ENCODE measurements at regions of chr5 and their contacts with region 1.

Region 1: DNA sequence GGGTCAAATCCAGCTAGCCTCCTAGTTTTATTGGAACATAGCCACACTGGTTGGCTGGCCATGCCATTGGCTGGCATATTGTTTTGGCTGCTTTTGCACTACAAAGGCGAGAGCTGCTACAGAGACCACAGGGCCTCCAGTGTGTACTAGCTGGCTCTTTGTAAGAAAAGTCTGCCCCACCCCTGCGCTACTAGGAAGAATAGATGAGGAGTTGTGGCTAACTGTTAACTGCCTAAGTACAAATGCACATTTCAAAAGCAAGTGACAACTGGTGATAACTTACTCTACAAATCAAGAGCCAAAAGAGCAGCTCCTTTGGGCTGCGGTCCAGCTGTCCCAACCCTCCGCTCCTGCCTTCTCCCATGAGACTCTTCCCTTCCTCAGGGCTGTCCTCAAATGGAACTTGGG is 63.9 kb downstream of the SERINC5 start:
- DNase-seq: peak; percentile 73
- ATAC-seq: peak; percentile 70
- H3K4me3 Mint-ChIP-seq: peak overlapping the region; percentile 66
- H3K27ac Mint-ChIP-seq: peak overlapping the region; percentile 86
- H3K4me1 Mint-ChIP-seq: peaks cover 77% of the 10 kb centered on the region
- H3K27me3 Mint-ChIP-seq: no peaks in the 10 kb centered on the region
- CTCF ChIP-seq: no peak

Region 2: GRCh38 chr5:79982136-79982535 is 209.9 kb before region 1 on chr5:
- CTCF ChIA-PET with region 1: no interaction called
- POLR2A ChIA-PET with region 1: no interaction called
- intact Hi-C with region 1: no loop called
- DNase-seq: no peak
- ATAC-seq: peak; percentile 13
- H3K4me3 Mint-ChIP-seq: no peak overlapping the region
- H3K27ac Mint-ChIP-seq: peak overlapping the region; percentile 76
- H3K4me1 Mint-ChIP-seq: peaks cover 63% of the 10 kb centered on the region
- H3K27me3 Mint-ChIP-seq: no peaks in the 10 kb centered on the region
- CTCF ChIP-seq: no peak

Region 3: GRCh38 chr5:80069918-80070318 is 122.1 kb before region 1 on chr5:
- CTCF ChIA-PET with region 1: no interaction called
- POLR2A ChIA-PET with region 1: no interaction called
- intact Hi-C with region 1: no loop called
- DNase-seq: no peak
- ATAC-seq: no peak
- H3K4me3 Mint-ChIP-seq: no peak overlapping the region
- H3K27ac Mint-ChIP-seq: no peak overlapping the region
- H3K4me1 Mint-ChIP-seq: peaks cover 4% of the 10 kb centered on the region
- H3K27me3 Mint-ChIP-seq: no peaks in the 10 kb centered on the region
- CTCF ChIP-seq: no peak

Region 4: GRCh38 chr5:80125962-80126480 is 66.0 kb before region 1 on chr5:
- CTCF ChIA-PET with region 1: no interaction called
- POLR2A ChIA-PET with region 1: interaction called, 3 read pairs
- intact Hi-C with region 1: loop called (anchors 5 kb)
- DNase-seq: peak; percentile 37
- ATAC-seq: peak; percentile 90
- H3K4me3 Mint-ChIP-seq: peak overlapping the region; percentile 11
- H3K27ac Mint-ChIP-seq: peak overlapping the region; percentile 78
- H3K4me1 Mint-ChIP-seq: peaks cover 55% of the 10 kb centered on the region
- H3K27me3 Mint-ChIP-seq: no peaks in the 10 kb centered on the region
- CTCF ChIP-seq: peak; percentile 36

Region 5: GRCh38 chr5:80181618-80182211 is 10.3 kb before region 1 on chr5:
- CTCF ChIA-PET with region 1: interaction called, 5 read pairs
- POLR2A ChIA-PET with region 1: interaction called, 16 read pairs
- intact Hi-C with region 1: no loop called
- DNase-seq: peak; percentile 68
- ATAC-seq: peak; percentile 34
- H3K4me3 Mint-ChIP-seq: peak overlapping the region; percentile 36
- H3K27ac Mint-ChIP-seq: peak overlapping the region; percentile 86
- H3K4me1 Mint-ChIP-seq: peaks cover 84% of the 10 kb centered on the region
- H3K27me3 Mint-ChIP-seq: no peaks in the 10 kb centered on the region
- CTCF ChIP-seq: no peak

Region 6: DNA sequence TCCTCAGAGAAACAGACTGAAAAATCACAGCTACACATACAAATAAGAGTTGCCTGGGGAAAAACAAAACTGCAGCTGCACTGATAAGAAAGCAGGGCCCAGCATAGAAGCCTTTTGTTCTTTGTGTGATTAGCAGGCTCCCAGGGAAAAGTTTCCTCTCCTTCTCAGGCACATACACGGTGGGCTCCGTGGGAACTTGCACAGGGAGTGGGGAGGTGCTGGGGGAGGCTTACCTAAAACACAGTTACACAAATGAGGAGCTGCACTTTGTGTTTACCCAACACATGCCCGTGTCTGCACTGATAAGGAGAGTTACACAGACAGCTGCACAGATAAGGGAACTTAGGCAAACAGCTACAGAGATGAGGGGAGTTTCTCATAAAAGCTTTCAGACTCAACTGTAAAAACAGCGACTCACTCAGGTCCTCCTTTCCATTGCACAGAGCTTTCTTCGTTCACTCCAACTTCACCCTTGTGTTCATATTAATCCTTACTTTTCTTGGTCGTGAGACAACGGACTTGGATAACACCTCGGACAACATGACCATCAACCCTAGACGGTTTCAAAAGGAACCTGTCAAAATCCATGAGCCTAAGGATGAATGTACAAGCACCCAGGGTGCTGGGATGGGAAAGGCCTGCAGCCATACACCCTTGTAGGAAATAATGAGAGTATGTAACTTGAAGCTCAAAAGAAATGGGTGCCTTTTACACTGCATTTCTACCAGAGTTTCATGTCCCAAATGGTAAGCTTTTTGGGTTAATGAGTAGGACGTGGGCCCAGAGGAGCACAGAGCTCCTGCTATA is 13.0 kb after region 1 on chr5:
- CTCF ChIA-PET with region 1: interaction called, 55 read pairs
- POLR2A ChIA-PET with region 1: interaction called, 50 read pairs
- intact Hi-C with region 1: no loop called
- DNase-seq: no peak
- ATAC-seq: peak; percentile 59
- H3K4me3 Mint-ChIP-seq: no peak overlapping the region
- H3K27ac Mint-ChIP-seq: peak overlapping the region; percentile 84
- H3K4me1 Mint-ChIP-seq: peaks cover 76% of the 10 kb centered on the region
- H3K27me3 Mint-ChIP-seq: no peaks in the 10 kb centered on the region
- CTCF ChIP-seq: no peak

Region 7: GRCh38 chr5:80216753-80217596 is 25.0 kb after region 1 on chr5:
- CTCF ChIA-PET with region 1: interaction called, 7 read pairs
- POLR2A ChIA-PET with region 1: interaction called, 19 read pairs
- intact Hi-C with region 1: no loop called
- DNase-seq: peak; percentile 67
- ATAC-seq: peak; percentile 22
- H3K4me3 Mint-ChIP-seq: peak overlapping the region; percentile 60
- H3K27ac Mint-ChIP-seq: peak overlapping the region; percentile 91
- H3K4me1 Mint-ChIP-seq: peaks cover 85% of the 10 kb centered on the region
- H3K27me3 Mint-ChIP-seq: no peaks in the 10 kb centered on the region
- CTCF ChIP-seq: no peak

Region 8: GRCh38 chr5:80246001-80246758 is 54.2 kb after region 1 on chr5:
- CTCF ChIA-PET with region 1: interaction called, 4 read pairs
- POLR2A ChIA-PET with region 1: interaction called, 10 read pairs
- intact Hi-C with region 1: loop called (anchors 5 kb)
- DNase-seq: no peak
- ATAC-seq: no peak
- H3K4me3 Mint-ChIP-seq: peak overlapping the region; percentile 28
- H3K27ac Mint-ChIP-seq: peak overlapping the region; percentile 90
- H3K4me1 Mint-ChIP-seq: peaks cover 62% of the 10 kb centered on the region
- H3K27me3 Mint-ChIP-seq: no peaks in the 10 kb centered on the region
- CTCF ChIP-seq: no peak